AG04450 (cell line): ENCODE measurements at regions of chr2 and their contacts with region 1.

Region 1: DNA sequence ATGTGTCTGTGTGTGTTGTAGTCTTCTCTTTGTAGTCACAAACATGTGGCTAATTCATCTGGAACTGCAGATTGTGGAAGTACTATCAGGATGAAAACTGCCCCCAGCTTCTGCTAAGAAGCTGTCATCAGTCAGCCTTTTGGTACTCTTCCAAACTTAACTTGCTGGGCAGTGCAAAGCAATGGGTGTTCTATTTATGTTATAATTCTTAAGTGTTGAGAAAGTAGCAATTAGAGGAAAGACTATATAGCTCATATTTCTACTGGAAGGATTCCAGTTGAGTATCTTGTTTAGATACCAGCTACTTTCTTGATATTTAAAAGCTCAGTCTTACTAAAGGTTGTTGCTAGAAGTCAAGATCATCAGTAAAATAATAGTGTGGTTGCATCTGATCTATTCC is 52.1 kb downstream of the SLC38A11 start:
- DNase-seq: peak; percentile 27
- H3K4me3 ChIP-seq: no peak overlapping the region
- H3K27ac ChIP-seq: no peak overlapping the region
- H3K27me3 ChIP-seq: no peaks in the 10 kb centered on the region
- CTCF ChIP-seq: no peak

Region 2: DNA sequence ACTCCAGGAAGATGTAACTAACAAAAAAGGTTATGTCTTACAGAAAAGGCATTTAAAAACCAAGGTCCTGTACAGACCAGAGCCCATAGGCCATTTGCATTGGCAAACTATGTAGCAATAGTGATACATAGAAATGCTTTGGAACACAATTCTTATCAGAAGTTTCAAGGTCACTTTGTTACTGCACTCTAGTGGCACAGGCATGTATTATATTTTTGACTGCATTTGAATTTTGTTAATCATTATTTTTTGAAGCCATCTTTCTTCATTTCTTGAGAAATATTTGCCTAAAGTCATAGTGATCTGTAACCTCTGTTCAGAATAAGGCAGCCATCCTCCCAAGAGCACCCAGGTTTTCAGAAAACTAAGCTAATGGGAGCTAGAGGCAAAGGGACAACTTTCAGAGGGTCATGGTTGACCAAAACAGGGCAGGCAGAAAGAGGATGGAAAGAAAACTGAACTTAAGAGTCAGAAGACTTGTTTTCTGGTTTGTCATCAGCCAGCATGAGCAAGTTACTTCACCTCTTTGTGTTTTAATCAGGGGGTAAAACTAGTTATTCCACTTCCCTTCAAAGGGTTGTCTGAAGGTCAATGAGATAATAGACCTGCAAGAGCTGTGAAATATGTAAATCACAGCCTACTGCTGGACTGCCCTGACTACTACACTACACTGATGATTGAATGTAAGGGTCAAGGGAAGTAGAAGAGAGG is 10.6 kb after region 1 on chr2:
- CTCF ChIA-PET with region 1: interaction called, 16 read pairs
- POLR2A ChIA-PET with region 1: no interaction called
- DNase-seq: no peak
- H3K4me3 ChIP-seq: no peak overlapping the region
- H3K27ac ChIP-seq: no peak overlapping the region
- H3K27me3 ChIP-seq: no peaks in the 10 kb centered on the region
- CTCF ChIP-seq: peak; percentile 30; the same call in 1 of the 2 replicates

Region 3: DNA sequence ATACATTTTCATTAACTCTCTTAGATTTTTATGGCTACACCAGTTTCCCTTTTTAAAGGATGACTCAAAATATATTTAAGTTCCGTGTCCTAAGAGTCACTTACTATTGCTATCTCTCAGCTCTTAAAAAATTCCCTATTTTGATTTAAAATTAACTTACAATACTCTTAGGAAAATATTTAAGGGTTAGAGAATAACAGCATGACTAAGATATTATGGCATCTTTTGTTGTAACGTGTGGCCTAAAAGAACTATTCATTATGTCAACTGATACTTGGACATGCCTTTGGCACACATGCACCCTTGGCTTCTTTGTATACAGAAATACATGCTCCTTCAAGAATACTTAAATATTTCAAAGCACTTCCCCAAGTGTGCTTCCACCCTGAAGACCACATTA is 258.3 kb after region 1 on chr2:
- CTCF ChIA-PET with region 1: no interaction called
- POLR2A ChIA-PET with region 1: no interaction called
- DNase-seq: peak; percentile 33
- H3K4me3 ChIP-seq: no peak overlapping the region
- H3K27ac ChIP-seq: no peak overlapping the region
- H3K27me3 ChIP-seq: no peaks in the 10 kb centered on the region
- CTCF ChIP-seq: no peak